HepG2 (cell line): ENCODE measurements at regions of chr3 and their contacts with region 1.

Region 1: GRCh38 chr3:108589146-108589997 is at the starts of genes CIP2A and DZIP3:
- DNase-seq: peak; percentile 96
- ATAC-seq: peak; percentile 99
- H3K4me3 ChIP-seq: peak within 1 kb of the TSS; percentile 79 to 91 (median 91)
- H3K27ac ChIP-seq: peak within 1 kb of the TSS; percentile 96
- H3K4me1 ChIP-seq: peaks cover 33% of the 10 kb centered on the region
- H3K27me3 ChIP-seq: no peaks in the 10 kb centered on the region; a peak in 2 of 5 replicates
- CTCF ChIP-seq: no peak
- EP300 ChIP-seq: no peak; a peak in 1 of 4 replicates
- POLR2A ChIP-seq: peak; percentile 96 to 98
- RAD21 ChIP-seq: no peak
- total RNA-seq, gene CIP2A: 36.9 and 54.1 TPM in 2 replicates
- total RNA-seq, gene DZIP3: 17.1 and 17.3 TPM in 2 replicates

Region 2: GRCh38 chr3:108599677-108600409 is 10.5 kb after region 1 on chr3:
- CTCF ChIA-PET with region 1: no interaction called
- POLR2A ChIA-PET with region 1: interaction called, 19 read pairs
- in situ Hi-C with region 1: no loop called
- intact Hi-C with region 1: no loop called
- DNase-seq: no peak
- ATAC-seq: no peak
- H3K4me3 ChIP-seq: no peak overlapping the region
- H3K27ac ChIP-seq: no peak overlapping the region
- H3K4me1 ChIP-seq: no peaks in the 10 kb centered on the region
- H3K27me3 ChIP-seq: no peaks in the 10 kb centered on the region
- CTCF ChIP-seq: no peak
- EP300 ChIP-seq: no peak
- POLR2A ChIP-seq: no peak
- RAD21 ChIP-seq: no peak